ENCODE measurements at regions of chr1 and their contacts with region 1.

Region 1: GRCh38 chr1:178960482-178961240 is 65.0 kb upstream of the FAM20B start:
- DNase-seq: no peak
- ATAC-seq: no peak
- H3K4me3 ChIP-seq: no peak overlapping the region
- H3K27ac ChIP-seq: no peak overlapping the region
- H3K4me1 ChIP-seq: no peaks in the 10 kb centered on the region
- H3K27me3 ChIP-seq: no peaks in the 10 kb centered on the region

Region 2: GRCh38 chr1:178986204-178986603 is 25.5 kb after region 1 on chr1:
- intact Hi-C with region 1: loop called in 1 of 2 experiments (anchors 1 kb)
- DNase-seq: no peak
- ATAC-seq: no peak
- H3K4me3 ChIP-seq: no peak overlapping the region
- H3K27ac ChIP-seq: no peak overlapping the region
- H3K4me1 ChIP-seq: no peaks in the 10 kb centered on the region
- H3K27me3 ChIP-seq: no peaks in the 10 kb centered on the region